IMR-90 (cell line): ENCODE measurements at regions of chr6 and their contacts with region 1.

Region 1: GRCh38 chr6:101597693-101598092 is 204.2 kb downstream of the GRIK2 start:
- DNase-seq: peak; percentile 94
- ATAC-seq: peak; percentile 88
- H3K4me3 ChIP-seq: no peak overlapping the region
- H3K27ac ChIP-seq: no peak overlapping the region
- H3K4me1 ChIP-seq: peaks cover 4% of the 10 kb centered on the region; the same call in 1 of the 2 replicates
- H3K27me3 ChIP-seq: no peaks in the 10 kb centered on the region
- CTCF ChIP-seq: no peak
- POLR2A ChIP-seq: no peak
- RAD21 ChIP-seq: no peak

Region 2: GRCh38 chr6:101582792-101583191 is 14.9 kb before region 1 on chr6:
- CTCF ChIA-PET with region 1: no interaction called
- POLR2A ChIA-PET with region 1: interaction called, 13 read pairs
- dilution Hi-C with region 1: no loop called
- in situ Hi-C with region 1: no loop called
- intact Hi-C with region 1: no loop called
- DNase-seq: no peak
- ATAC-seq: no peak
- H3K4me3 ChIP-seq: no peak overlapping the region
- H3K27ac ChIP-seq: no peak overlapping the region
- H3K4me1 ChIP-seq: no peaks in the 10 kb centered on the region
- H3K27me3 ChIP-seq: no peaks in the 10 kb centered on the region
- CTCF ChIP-seq: no peak
- POLR2A ChIP-seq: no peak
- RAD21 ChIP-seq: no peak

Region 3: DNA sequence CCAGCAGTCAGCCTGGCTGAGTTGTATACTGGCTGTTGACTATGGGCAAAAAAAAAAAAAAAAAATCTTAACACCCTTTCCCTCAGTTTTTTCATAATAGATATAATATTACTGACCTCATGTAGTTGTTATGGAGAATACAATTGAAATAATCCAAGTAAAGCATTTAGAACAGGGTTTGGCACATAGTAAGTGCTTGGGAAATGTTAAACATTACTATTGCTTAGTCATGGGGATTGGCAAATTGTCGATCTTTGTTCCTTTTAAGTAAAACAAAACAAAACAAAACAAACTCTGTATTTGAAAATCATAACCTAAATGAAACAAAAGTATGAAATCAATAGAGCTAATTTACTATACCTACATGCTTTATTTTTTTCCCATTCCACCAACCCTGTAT is 254.2 kb after region 1 on chr6:
- CTCF ChIA-PET with region 1: no interaction called
- POLR2A ChIA-PET with region 1: no interaction called
- dilution Hi-C with region 1: no loop called
- in situ Hi-C with region 1: no loop called
- intact Hi-C with region 1: no loop called
- DNase-seq: peak; percentile 49
- ATAC-seq: no peak
- H3K4me3 ChIP-seq: no peak overlapping the region
- H3K27ac ChIP-seq: no peak overlapping the region
- H3K4me1 ChIP-seq: no peaks in the 10 kb centered on the region
- H3K27me3 ChIP-seq: no peaks in the 10 kb centered on the region
- CTCF ChIP-seq: no peak
- POLR2A ChIP-seq: no peak
- RAD21 ChIP-seq: no peak